Naive thymus-derived CD4-positive, alpha-beta T cell (primary cell): ENCODE measurements at regions of chr7 and their contacts with region 1.

Region 1: GRCh38 chr7:150567169-150567568 is at the start of gene GIMAP4:
- DNase-seq: peak in 4 of 9 donors; percentile 21 to 53 (median 42)
- ATAC-seq: peak; percentile 58
- H3K4me3 ChIP-seq: peak within 1 kb of the TSS; percentile 92
- H3K4me3 Mint-ChIP-seq: peak within 1 kb of the TSS; percentile 87 to 99 (median 96)
- H3K27ac ChIP-seq: peak within 1 kb of the TSS; percentile 84
- H3K27ac Mint-ChIP-seq: peak within 1 kb of the TSS; percentile 92 to 99 (median 97)
- H3K4me1 ChIP-seq: peaks cover 45 to 68% of the 10 kb centered on the region in 2 donors
- H3K4me1 Mint-ChIP-seq: peaks cover 39 to 81% (median 70%) of the 10 kb centered on the region in 7 donors
- H3K27me3 ChIP-seq: no peaks in the 10 kb centered on the region
- H3K27me3 Mint-ChIP-seq: no peaks in the 10 kb centered on the region
- total RNA-seq, gene GIMAP4: 74.9 to 413 (median 406) TPM

Region 2: GRCh38 chr7:150471886-150472285 is 95.3 kb before region 1 on chr7:
- CTCF ChIA-PET with region 1: no interaction called
- POLR2A ChIA-PET with region 1: interaction called, 32 read pairs
- intact Hi-C with region 1: no loop called
- DNase-seq: no peak
- ATAC-seq: no peak
- H3K4me3 ChIP-seq: no peak overlapping the region
- H3K4me3 Mint-ChIP-seq: peak overlapping the region in 4 of 10 donors; percentile 25 to 36 (median 32)
- H3K27ac ChIP-seq: peak overlapping the region; percentile 11
- H3K27ac Mint-ChIP-seq: peak overlapping the region; percentile 11 to 97 (median 80)
- H3K4me1 ChIP-seq: peaks cover 43 to 53% of the 10 kb centered on the region in 2 donors
- H3K4me1 Mint-ChIP-seq: peaks cover 55 to 96% (median 92%) of the 10 kb centered on the region in 7 donors
- H3K27me3 ChIP-seq: no peaks in the 10 kb centered on the region
- H3K27me3 Mint-ChIP-seq: no peaks in the 10 kb centered on the region

Region 3: GRCh38 chr7:150514748-150515222 is 52.4 kb before region 1 on chr7 and contains the start of gene GIMAP7:
- CTCF ChIA-PET with region 1: interaction called, 20 read pairs
- POLR2A ChIA-PET with region 1: interaction called, 526 read pairs
- intact Hi-C with region 1: loop called (anchors 1 kb)
- DNase-seq: peak; percentile 38 to 90 (median 82)
- ATAC-seq: peak; percentile 86
- H3K4me3 ChIP-seq: peak within 1 kb of the TSS; percentile 94
- H3K4me3 Mint-ChIP-seq: peak within 1 kb of the TSS; percentile 93 to 100 (median 99)
- H3K27ac ChIP-seq: peak within 1 kb of the TSS; percentile 84
- H3K27ac Mint-ChIP-seq: peak within 1 kb of the TSS; percentile 94 to 99 (median 98)
- H3K4me1 ChIP-seq: peaks cover 45% of the 10 kb centered on the region in 2 donors
- H3K4me1 Mint-ChIP-seq: peaks cover 38 to 48% (median 46%) of the 10 kb centered on the region in 7 donors
- H3K27me3 ChIP-seq: no peaks in the 10 kb centered on the region
- H3K27me3 Mint-ChIP-seq: no peaks in the 10 kb centered on the region
- total RNA-seq, gene GIMAP7: 66.3 to 555 (median 321) TPM

Region 4: GRCh38 chr7:150586785-150587152 is 19.6 kb after region 1 on chr7:
- CTCF ChIA-PET with region 1: interaction called, 5 read pairs
- POLR2A ChIA-PET with region 1: interaction called, 71 read pairs
- intact Hi-C with region 1: no loop called
- DNase-seq: no peak
- ATAC-seq: peak; percentile 61
- H3K4me3 ChIP-seq: no peak overlapping the region
- H3K4me3 Mint-ChIP-seq: peak overlapping the region in 9 of 10 donors; percentile 12 to 56 (median 38)
- H3K27ac ChIP-seq: peak overlapping the region; percentile 11
- H3K27ac Mint-ChIP-seq: peak overlapping the region; percentile 63 to 97 (median 80)
- H3K4me1 ChIP-seq: peaks cover 16 to 29% of the 10 kb centered on the region in 2 donors
- H3K4me1 Mint-ChIP-seq: peaks cover 27 to 87% (median 75%) of the 10 kb centered on the region in 7 donors
- H3K27me3 ChIP-seq: no peaks in the 10 kb centered on the region
- H3K27me3 Mint-ChIP-seq: no peaks in the 10 kb centered on the region

Region 5: DNA sequence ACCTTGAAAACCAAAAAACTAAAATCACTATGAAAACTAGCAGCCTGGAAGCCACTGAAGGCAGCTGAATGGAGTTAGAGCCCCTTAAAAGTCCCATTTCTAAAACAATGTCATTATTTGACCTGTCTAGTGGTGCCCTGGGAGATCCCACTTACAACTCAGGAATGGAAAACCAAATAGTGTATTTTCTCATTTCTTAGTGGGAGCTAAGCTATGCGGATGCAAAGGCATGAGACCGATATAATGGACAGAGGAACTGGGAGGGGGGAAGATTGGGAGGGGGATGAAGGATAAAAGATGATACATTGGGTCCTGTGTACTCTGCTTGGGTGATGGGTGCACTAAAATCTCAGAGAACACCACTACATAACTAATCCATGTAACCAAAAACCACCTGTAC is 108.5 kb after region 1 on chr7:
- CTCF ChIA-PET with region 1: interaction called, 4 read pairs
- POLR2A ChIA-PET with region 1: interaction called, 50 read pairs
- intact Hi-C with region 1: loop called in 1 of 2 experiments (anchors 1 kb)
- DNase-seq: no peak
- ATAC-seq: no peak
- H3K4me3 ChIP-seq: no peak overlapping the region
- H3K4me3 Mint-ChIP-seq: peak overlapping the region in 9 of 10 donors; percentile 34 to 93 (median 76)
- H3K27ac ChIP-seq: peak overlapping the region; percentile 71
- H3K27ac Mint-ChIP-seq: peak overlapping the region; percentile 82 to 98 (median 94)
- H3K4me1 ChIP-seq: peaks cover 38 to 52% of the 10 kb centered on the region in 2 donors
- H3K4me1 Mint-ChIP-seq: peaks cover 43 to 88% (median 78%) of the 10 kb centered on the region in 7 donors
- H3K27me3 ChIP-seq: no peaks in the 10 kb centered on the region
- H3K27me3 Mint-ChIP-seq: no peaks in the 10 kb centered on the region

Region 6: DNA sequence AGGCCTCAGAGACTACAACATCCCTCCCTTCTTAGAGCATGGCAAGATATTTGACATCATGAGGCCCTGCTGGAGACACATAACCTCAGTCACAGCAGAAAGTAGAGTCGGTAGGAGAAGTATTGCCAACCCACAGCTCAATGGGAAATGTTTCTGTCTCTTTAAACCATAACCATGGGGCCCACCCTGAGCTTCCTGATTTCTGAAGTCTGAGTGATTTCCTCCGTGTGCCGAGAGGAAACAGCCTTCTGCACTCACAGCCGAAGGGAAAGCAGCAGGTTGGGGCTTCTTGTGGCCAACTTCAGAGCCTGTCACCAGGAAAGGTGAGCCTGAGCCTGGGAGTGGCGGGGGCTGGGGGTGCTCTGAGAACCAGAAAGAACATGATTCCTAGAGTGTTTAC is 149.2 kb after region 1 on chr7 and contains the start of gene GIMAP1:
- CTCF ChIA-PET with region 1: interaction called, 17 read pairs
- POLR2A ChIA-PET with region 1: interaction called, 251 read pairs
- intact Hi-C with region 1: loop called (anchors 1 to 2 kb)
- DNase-seq: peak in 8 of 9 donors; percentile 14 to 85 (median 81)
- ATAC-seq: peak; percentile 90
- H3K4me3 ChIP-seq: peak within 1 kb of the TSS; percentile 88
- H3K4me3 Mint-ChIP-seq: peak within 1 kb of the TSS; percentile 89 to 100 (median 98)
- H3K27ac ChIP-seq: peak within 1 kb of the TSS; percentile 86
- H3K27ac Mint-ChIP-seq: peak within 1 kb of the TSS; percentile 76 to 98 (median 95)
- H3K4me1 ChIP-seq: peaks cover 39 to 46% of the 10 kb centered on the region in 2 donors
- H3K4me1 Mint-ChIP-seq: peaks cover 38 to 77% (median 61%) of the 10 kb centered on the region in 7 donors
- H3K27me3 ChIP-seq: no peaks in the 10 kb centered on the region
- H3K27me3 Mint-ChIP-seq: no peaks in the 10 kb centered on the region
- total RNA-seq, gene GIMAP1: 23.3 to 124 (median 32.6) TPM

Region 7: DNA sequence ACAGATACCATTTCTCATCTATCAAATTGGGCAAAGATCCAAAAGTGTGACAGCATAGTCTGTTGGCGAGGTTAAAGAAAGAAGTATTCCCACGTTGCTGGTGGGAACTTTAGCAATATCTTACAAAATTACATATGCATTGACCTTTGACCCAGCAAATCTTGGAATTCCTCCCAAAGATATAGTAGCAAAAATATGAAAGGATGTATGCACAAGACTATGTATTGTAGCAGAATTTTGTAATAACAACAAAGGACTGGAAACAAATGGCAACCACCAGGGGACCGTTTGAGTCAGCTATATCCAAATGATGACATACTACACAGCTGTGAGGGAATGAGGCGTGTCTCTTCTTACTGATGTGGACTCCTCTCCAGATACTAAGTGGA is 360.8 kb after region 1 on chr7:
- CTCF ChIA-PET with region 1: no interaction called
- POLR2A ChIA-PET with region 1: no interaction called
- intact Hi-C with region 1: no loop called
- DNase-seq: no peak
- ATAC-seq: no peak
- H3K4me3 ChIP-seq: no peak overlapping the region
- H3K4me3 Mint-ChIP-seq: no peak overlapping the region
- H3K27ac ChIP-seq: no peak overlapping the region
- H3K27ac Mint-ChIP-seq: no peak overlapping the region
- H3K4me1 ChIP-seq: peaks cover 0 to 5% of the 10 kb centered on the region in 2 donors
- H3K4me1 Mint-ChIP-seq: peaks cover 8 to 30% (median 23%) of the 10 kb centered on the region in 7 donors
- H3K27me3 ChIP-seq: no peaks in the 10 kb centered on the region
- H3K27me3 Mint-ChIP-seq: peaks cover 0 to 49% (median 4%) of the 10 kb centered on the region in 5 donors

Region 8: GRCh38 chr7:151368136-151368571 is 801.0 kb after region 1 on chr7:
- CTCF ChIA-PET with region 1: no interaction called
- POLR2A ChIA-PET with region 1: no interaction called
- intact Hi-C with region 1: no loop called
- DNase-seq: peak; percentile 55 to 80 (median 69)
- ATAC-seq: peak; percentile 99
- H3K4me3 ChIP-seq: no peak overlapping the region
- H3K4me3 Mint-ChIP-seq: no peak overlapping the region
- H3K27ac ChIP-seq: no peak overlapping the region
- H3K27ac Mint-ChIP-seq: peak overlapping the region in 2 of 9 donors; percentile 46 to 56
- H3K4me1 ChIP-seq: peaks cover 0 to 4% of the 10 kb centered on the region in 2 donors
- H3K4me1 Mint-ChIP-seq: peaks cover 3 to 29% (median 12%) of the 10 kb centered on the region in 7 donors
- H3K27me3 ChIP-seq: no peaks in the 10 kb centered on the region
- H3K27me3 Mint-ChIP-seq: no peaks in the 10 kb centered on the region

Region 9: DNA sequence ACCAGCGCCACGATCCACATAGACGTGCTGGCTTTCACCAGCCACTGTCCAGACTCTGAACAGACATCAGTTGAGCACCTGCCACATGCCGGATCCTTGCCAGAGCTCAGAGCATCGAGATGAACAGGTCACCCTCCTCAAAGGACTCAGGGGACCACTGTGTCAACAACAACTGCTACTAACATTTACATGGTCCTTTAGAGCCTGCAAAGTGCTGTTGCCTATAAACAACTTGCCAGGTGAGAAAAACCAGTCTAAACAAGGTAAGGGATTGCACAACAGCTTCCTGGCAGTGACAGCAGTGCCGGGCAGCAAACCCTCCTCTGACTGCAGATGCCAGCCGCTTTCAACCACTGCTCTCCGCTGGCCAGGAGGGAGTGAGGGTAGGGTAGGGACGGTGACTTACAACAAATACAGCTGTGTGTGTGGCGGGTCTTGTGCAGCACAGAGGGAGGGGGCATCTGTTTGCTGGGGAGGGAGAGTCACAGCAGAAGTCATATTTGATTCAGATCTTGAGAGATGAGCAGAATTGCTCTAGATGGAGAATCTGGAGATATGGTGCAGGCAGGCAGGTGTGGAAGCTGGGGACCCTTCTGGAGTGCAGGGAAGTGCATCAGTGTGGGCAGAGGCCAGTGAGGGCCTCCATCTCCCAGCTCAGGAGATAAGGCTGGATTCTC is 985.3 kb after region 1 on chr7:
- CTCF ChIA-PET with region 1: no interaction called
- POLR2A ChIA-PET with region 1: no interaction called
- intact Hi-C with region 1: no loop called
- DNase-seq: no peak
- ATAC-seq: no peak
- H3K4me3 ChIP-seq: no peak overlapping the region
- H3K4me3 Mint-ChIP-seq: no peak overlapping the region
- H3K27ac ChIP-seq: no peak overlapping the region
- H3K27ac Mint-ChIP-seq: peak overlapping the region in 2 of 9 donors; percentile 25 to 68
- H3K4me1 ChIP-seq: no peaks in the 10 kb centered on the region
- H3K4me1 Mint-ChIP-seq: peaks cover 0 to 15% (median 8%) of the 10 kb centered on the region in 7 donors
- H3K27me3 ChIP-seq: no peaks in the 10 kb centered on the region
- H3K27me3 Mint-ChIP-seq: peaks cover 0 to 7% (median 0%) of the 10 kb centered on the region in 5 donors